MCF 10A (cell line): ENCODE measurements at regions of chr4 and their contacts with region 1.

Region 1: GRCh38 chr4:119025916-119026661 is 109.5 kb upstream of the MYOZ2 start:
- DNase-seq: peak; percentile 88
- H3K4me3 Mint-ChIP-seq: peak overlapping the region; percentile 62
- H3K27ac Mint-ChIP-seq: peak overlapping the region; percentile 95
- H3K4me1 Mint-ChIP-seq: peaks cover 10% of the 10 kb centered on the region
- H3K27me3 Mint-ChIP-seq: no peaks in the 10 kb centered on the region
- CTCF ChIP-seq: peak; percentile 6

Region 2: GRCh38 chr4:118888666-118889311 is 137.3 kb before region 1 on chr4 and contains the start of gene SYNPO2:
- CTCF ChIA-PET with region 1: no interaction called
- POLR2A ChIA-PET with region 1: no interaction called
- intact Hi-C with region 1: no loop called
- DNase-seq: peak; percentile 63
- H3K4me3 Mint-ChIP-seq: peak within 1 kb of the TSS; percentile 67
- H3K27ac Mint-ChIP-seq: no peak within 1 kb of the TSS
- H3K4me1 Mint-ChIP-seq: peaks cover 14% of the 10 kb centered on the region
- H3K27me3 Mint-ChIP-seq: no peaks in the 10 kb centered on the region
- CTCF ChIP-seq: no peak
- total RNA-seq, gene SYNPO2: 0.42 and 0.61 TPM in 2 replicates

Region 3: GRCh38 chr4:119300101-119300978 is 274.3 kb after region 1 on chr4:
- CTCF ChIA-PET with region 1: interaction called, 3 read pairs
- POLR2A ChIA-PET with region 1: interaction called, 23 read pairs
- intact Hi-C with region 1: no loop called
- DNase-seq: peak; percentile 92
- H3K4me3 Mint-ChIP-seq: peak overlapping the region; percentile 93
- H3K27ac Mint-ChIP-seq: peak overlapping the region; percentile 97
- H3K4me1 Mint-ChIP-seq: peaks cover 12% of the 10 kb centered on the region
- H3K27me3 Mint-ChIP-seq: no peaks in the 10 kb centered on the region
- CTCF ChIP-seq: no peak